ENCODE measurements at regions of chr13 and their contacts with region 1.

Region 1: GRCh38 chr13:106536244-106537034 is 977 bp upstream of the EFNB2 start:
- DNase-seq: peak; percentile 93
- ATAC-seq: peak; percentile 32
- H3K4me3 Mint-ChIP-seq: peak overlapping the region; percentile 79
- H3K27ac Mint-ChIP-seq: peak overlapping the region; percentile 55
- H3K4me1 Mint-ChIP-seq: peaks cover 19% of the 10 kb centered on the region
- H3K27me3 Mint-ChIP-seq: peaks cover 25% of the 10 kb centered on the region

Region 2: DNA sequence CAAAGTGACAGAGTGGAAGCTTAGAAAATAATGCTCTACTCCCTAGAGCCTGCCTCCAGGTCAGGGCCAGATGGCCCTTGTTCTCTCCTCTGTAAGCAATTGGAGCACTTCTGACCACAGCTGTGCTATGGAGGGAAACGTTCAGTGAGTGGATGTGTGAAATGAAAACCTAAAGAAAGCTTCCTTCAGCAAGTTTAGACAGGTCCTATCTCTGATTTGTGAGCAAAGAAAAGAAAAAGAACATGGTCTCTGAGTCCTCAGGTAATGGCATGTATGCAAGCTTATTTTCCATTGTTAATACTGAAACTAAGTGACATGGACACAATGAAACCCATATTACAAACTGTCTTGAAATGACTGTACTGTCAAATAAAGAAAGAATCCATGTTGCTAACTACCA is 1487.8 kb before region 1 on chr13:
- CTCF ChIA-PET with region 1: no interaction called
- POLR2A ChIA-PET with region 1: no interaction called
- intact Hi-C with region 1: loop called in 1 of 2 experiments (anchors 5 kb)
- DNase-seq: no peak
- ATAC-seq: peak; percentile 26
- H3K4me3 Mint-ChIP-seq: no peak overlapping the region
- H3K27ac Mint-ChIP-seq: no peak overlapping the region
- H3K4me1 Mint-ChIP-seq: peaks cover 2% of the 10 kb centered on the region
- H3K27me3 Mint-ChIP-seq: peaks cover 2% of the 10 kb centered on the region

Region 3: DNA sequence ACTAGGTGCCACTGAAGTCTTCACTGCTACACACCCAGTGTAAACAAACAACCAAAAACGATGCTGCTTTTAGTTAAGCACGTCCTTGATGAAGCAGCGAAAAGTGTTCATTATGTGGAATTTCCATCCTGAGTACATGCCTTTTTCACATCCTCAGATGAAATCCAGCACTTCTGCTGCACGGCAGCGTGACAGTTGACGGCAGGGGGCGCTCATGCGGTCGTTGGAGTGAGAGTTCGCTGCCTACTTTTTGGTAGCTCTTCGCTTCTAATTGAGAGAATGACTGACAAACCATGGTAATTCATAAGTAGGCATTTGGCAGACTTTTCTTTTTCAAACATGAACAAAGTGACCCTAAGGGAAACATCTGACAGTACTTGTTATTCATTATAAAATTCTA is 1125.8 kb before region 1 on chr13:
- CTCF ChIA-PET with region 1: interaction called, 3 read pairs
- POLR2A ChIA-PET with region 1: no interaction called
- intact Hi-C with region 1: loop called in 1 of 2 experiments (anchors 5 kb)
- DNase-seq: peak; percentile 57
- ATAC-seq: no peak
- H3K4me3 Mint-ChIP-seq: no peak overlapping the region
- H3K27ac Mint-ChIP-seq: no peak overlapping the region
- H3K4me1 Mint-ChIP-seq: no peaks in the 10 kb centered on the region
- H3K27me3 Mint-ChIP-seq: no peaks in the 10 kb centered on the region

Region 4: GRCh38 chr13:106083620-106084350 is 452.7 kb before region 1 on chr13:
- CTCF ChIA-PET with region 1: no interaction called
- POLR2A ChIA-PET with region 1: no interaction called
- intact Hi-C with region 1: loop called in 1 of 2 experiments (anchors 1 kb)
- DNase-seq: peak; percentile 33
- ATAC-seq: peak; percentile 51
- H3K4me3 Mint-ChIP-seq: no peak overlapping the region
- H3K27ac Mint-ChIP-seq: no peak overlapping the region
- H3K4me1 Mint-ChIP-seq: no peaks in the 10 kb centered on the region
- H3K27me3 Mint-ChIP-seq: peaks cover 3% of the 10 kb centered on the region

Region 5: GRCh38 chr13:106104281-106104901 is 432.0 kb before region 1 on chr13:
- CTCF ChIA-PET with region 1: no interaction called
- POLR2A ChIA-PET with region 1: no interaction called
- intact Hi-C with region 1: no loop called
- DNase-seq: no peak
- ATAC-seq: no peak
- H3K4me3 Mint-ChIP-seq: no peak overlapping the region
- H3K27ac Mint-ChIP-seq: no peak overlapping the region
- H3K4me1 Mint-ChIP-seq: no peaks in the 10 kb centered on the region
- H3K27me3 Mint-ChIP-seq: no peaks in the 10 kb centered on the region

Region 6: DNA sequence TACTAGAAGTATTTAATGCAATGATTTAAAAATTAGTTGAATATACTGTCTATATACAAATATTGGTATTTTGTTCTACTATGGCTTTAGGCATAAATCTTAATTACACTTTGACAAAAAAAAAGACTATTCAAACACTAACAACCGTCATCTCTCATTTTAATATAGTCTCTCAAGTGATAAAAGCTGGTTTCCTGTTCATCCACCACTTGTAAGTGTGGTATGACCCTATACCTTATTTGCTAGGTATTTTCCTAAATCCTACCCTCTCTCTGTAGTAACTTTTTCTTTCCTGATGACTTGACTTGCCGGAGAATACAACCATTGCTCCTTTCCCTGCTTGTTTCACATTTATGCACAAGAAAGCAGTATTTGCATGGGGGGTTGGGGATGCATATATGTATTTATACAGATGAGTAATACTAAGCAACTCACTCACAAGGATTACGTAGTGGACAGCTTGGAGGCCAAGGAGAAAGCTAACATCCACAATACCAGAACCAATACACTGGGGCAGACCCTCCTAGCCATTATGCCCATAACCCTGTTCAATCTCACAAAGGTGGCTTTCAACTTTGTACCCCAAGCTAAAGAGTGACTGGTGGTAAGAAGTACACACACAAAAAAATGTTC is 11.7 kb after region 1 on chr13:
- CTCF ChIA-PET with region 1: interaction called, 10 read pairs
- POLR2A ChIA-PET with region 1: interaction called, 5 read pairs
- intact Hi-C with region 1: no loop called
- DNase-seq: no peak
- ATAC-seq: no peak
- H3K4me3 Mint-ChIP-seq: no peak overlapping the region
- H3K27ac Mint-ChIP-seq: no peak overlapping the region
- H3K4me1 Mint-ChIP-seq: peaks cover 14% of the 10 kb centered on the region
- H3K27me3 Mint-ChIP-seq: no peaks in the 10 kb centered on the region

Region 7: GRCh38 chr13:106567474-106568298 is 31.2 kb after region 1 on chr13 and contains the start of gene ARGLU1:
- CTCF ChIA-PET with region 1: interaction called, 36 read pairs
- POLR2A ChIA-PET with region 1: no interaction called
- intact Hi-C with region 1: loop called (anchors 1 kb)
- DNase-seq: peak; percentile 97
- ATAC-seq: peak; percentile 88
- H3K4me3 Mint-ChIP-seq: peak within 1 kb of the TSS; percentile 97
- H3K27ac Mint-ChIP-seq: peak within 1 kb of the TSS; percentile 92
- H3K4me1 Mint-ChIP-seq: peaks cover 39% of the 10 kb centered on the region
- H3K27me3 Mint-ChIP-seq: no peaks in the 10 kb centered on the region
- total RNA-seq, gene ARGLU1: 68.8 to 94.2 TPM

Region 8: GRCh38 chr13:106917673-106918556 is 381.5 kb after region 1 on chr13:
- CTCF ChIA-PET with region 1: interaction called, 4 read pairs
- POLR2A ChIA-PET with region 1: no interaction called
- intact Hi-C with region 1: loop called (anchors 1 to 5 kb)
- DNase-seq: peak; percentile 84
- ATAC-seq: peak; percentile 95
- H3K4me3 Mint-ChIP-seq: peak overlapping the region; percentile 68
- H3K27ac Mint-ChIP-seq: peak overlapping the region; percentile 55
- H3K4me1 Mint-ChIP-seq: peaks cover 5% of the 10 kb centered on the region
- H3K27me3 Mint-ChIP-seq: peaks cover 34% of the 10 kb centered on the region

Measured in activated CD4-positive, alpha-beta T cell treated with anti-CD3 and anti-CD28 coated beads for 36 hours (primary cell).